Posterior vena cava (tissue), 2 donors: ENCODE measurements at regions of chr17 and their contacts with region 1.

Region 1: GRCh38 chr17:51064061-51064735 is 56.5 kb downstream of the SPAG9 start:
- DNase-seq: no peak

Region 2: DNA sequence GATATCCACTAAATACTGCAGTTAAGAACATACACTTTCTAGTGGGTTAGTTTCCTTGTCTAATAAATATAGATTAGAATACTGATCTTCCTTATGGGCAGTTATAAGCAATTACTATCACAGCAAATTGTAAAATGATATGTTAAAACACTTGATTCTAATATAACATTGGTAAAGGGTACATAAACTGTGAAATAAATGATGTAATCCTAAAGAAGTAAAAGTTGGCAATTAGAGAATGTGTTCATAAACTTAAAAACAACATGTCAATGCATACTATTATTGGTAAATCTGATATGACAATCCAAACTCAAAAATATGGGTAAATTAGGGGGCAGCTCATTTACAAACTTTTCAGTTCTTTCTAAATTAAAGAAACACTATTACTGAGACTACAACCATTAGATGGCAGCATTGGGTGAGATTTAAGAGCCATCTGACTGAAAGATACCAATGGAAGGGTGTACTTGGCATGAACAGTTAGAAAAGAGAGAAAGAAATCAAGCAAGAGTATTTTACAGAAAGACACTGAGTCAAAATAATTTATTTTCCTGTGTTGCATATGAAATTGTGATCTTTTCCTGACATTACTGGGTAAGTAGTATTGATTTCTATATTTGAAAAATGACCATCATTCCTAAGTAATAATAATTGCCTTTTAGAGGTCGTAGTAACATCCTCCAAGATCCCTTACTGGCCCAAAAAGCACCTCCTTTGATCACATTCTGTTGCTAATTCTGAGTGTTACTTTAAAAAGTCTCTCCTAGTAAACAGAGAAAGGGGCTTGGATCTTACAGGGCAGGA is 63.2 kb before region 1 on chr17:
- intact Hi-C with region 1: no loop called
- DNase-seq: no peak

Region 3: GRCh38 chr17:51015145-51015558 is 49.0 kb before region 1 on chr17:
- intact Hi-C with region 1: loop called in 1 of 2 experiments (anchors 10 kb)
- DNase-seq: no peak